Activated T-helper 1 cell treated with anti-CD3 and anti-CD28 coated beads, Interleukin-12 subunit alpha, Interleukin-12 subunit beta, Interleukin-2, Interleukin-4 antibody, amounts not matched to agents 30 ng/mL and 10 ng/mL and 1 ng/mL, durations not matched to agents 14 hours and 24 hours and 36 hours (primary cell): ENCODE measurements at regions of chr1 and their contacts with region 1.

Region 1: DNA sequence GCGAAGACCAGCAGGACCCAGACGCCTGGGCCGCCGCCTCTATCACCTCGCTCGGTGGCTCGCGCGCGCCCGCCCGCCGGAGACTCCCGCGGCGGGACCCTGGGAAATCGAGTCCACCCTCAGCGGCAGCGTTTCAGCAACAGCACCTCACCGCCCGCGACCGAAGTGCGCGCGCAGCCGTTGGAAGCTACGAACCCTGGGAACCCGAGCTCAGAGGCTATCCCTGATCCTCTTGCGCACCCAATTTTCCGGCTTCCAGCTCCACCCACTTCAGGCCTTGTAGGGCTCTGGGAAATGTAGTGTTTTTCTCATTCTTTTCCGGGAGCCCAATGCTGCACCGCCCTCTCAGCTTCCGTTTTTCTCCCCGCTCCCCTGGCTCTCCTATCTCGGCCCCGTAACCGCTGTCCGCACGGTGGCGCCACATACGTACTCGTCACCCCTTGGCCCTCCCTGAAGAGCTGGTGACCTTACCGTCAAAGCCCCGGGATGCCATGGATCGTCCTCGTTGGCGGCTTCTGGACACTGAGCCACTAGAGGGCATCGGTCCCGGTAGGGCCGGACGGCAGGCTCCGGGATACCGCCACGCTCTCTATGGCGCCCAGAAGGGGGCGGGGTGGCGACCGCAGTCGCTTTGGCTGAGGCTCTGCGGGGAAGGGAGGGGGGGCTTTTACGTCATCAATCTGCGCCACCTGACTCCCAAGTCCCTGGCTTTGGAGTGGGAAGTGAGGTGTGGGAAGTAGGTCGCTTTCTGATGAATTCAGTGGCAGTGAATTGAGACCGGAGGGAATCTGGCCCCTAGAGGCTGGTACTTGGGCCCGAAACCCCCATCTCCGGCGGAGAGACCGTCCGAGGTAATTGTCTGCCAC is at the starts of genes ODR4 and TPR:
- DNase-seq: peak; percentile 96
- H3K4me3 Mint-ChIP-seq: peak within 1 kb of the TSS; percentile 100
- H3K27ac Mint-ChIP-seq: peak within 1 kb of the TSS; percentile 96
- H3K4me1 Mint-ChIP-seq: peaks cover 59% of the 10 kb centered on the region
- H3K27me3 Mint-ChIP-seq: peaks cover 4% of the 10 kb centered on the region
- total RNA-seq, gene ODR4: 15.5 and 17.7 TPM in 2 replicates
- total RNA-seq, gene TPR: 174 and 179 TPM in 2 replicates

Region 2: DNA sequence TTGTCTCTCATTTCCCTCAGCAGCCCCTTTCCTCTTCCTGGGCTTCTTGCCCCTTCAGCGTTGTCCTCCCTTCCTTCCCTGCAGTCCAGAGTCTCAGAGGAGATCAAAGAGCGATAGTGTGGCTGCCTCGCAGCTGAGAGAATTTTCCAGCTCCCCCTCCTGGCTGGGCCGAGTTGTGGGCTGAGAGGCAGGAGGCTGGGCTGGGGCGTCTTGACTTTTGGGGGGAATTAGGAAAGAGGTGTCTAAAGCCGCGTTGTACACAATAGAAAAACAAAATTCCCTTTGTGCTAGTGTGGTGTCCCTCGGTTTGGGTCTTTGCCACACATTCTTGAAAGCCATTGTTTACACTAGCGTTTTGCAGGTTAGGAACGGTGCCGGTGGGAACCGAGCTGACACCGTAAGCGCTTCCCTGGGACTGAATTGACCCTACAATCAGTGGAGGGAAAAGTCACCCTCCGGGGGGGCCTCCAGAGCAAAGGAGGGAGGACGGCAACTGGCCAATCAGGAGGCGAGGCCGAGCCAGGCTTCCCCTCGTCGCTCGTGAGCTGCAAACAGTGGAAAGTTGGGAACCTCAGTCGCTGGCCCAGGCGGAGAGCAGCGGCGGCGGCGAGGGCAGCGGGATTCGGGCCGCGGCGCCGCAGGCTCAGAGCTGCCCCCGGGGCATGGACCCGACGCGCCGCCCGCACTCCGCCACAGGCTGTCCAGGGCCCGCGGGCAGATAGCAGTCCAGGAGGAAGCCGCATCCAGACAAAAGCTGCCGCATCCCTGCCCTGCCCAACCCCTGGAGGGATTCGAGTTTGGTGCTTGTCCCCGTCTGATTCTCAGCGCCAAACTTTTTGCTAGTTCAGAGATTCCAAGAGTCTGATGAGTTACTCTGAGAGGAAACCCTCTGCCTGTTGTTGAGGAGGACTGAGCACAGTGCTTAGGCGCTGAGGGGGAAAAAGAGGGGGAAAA is 641.2 kb before region 1 on chr1 and contains the start of gene HMCN1:
- intact Hi-C with region 1: loop called (anchors 5 kb)
- DNase-seq: peak; percentile 9
- H3K4me3 Mint-ChIP-seq: peak within 1 kb of the TSS; percentile 70
- H3K27ac Mint-ChIP-seq: no peak within 1 kb of the TSS
- H3K4me1 Mint-ChIP-seq: peaks cover 18% of the 10 kb centered on the region
- H3K27me3 Mint-ChIP-seq: peaks cover 59% of the 10 kb centered on the region
- total RNA-seq, gene HMCN1: under 0.01 TPM in 1 of 2 replicates, not detected in the other

Region 3: DNA sequence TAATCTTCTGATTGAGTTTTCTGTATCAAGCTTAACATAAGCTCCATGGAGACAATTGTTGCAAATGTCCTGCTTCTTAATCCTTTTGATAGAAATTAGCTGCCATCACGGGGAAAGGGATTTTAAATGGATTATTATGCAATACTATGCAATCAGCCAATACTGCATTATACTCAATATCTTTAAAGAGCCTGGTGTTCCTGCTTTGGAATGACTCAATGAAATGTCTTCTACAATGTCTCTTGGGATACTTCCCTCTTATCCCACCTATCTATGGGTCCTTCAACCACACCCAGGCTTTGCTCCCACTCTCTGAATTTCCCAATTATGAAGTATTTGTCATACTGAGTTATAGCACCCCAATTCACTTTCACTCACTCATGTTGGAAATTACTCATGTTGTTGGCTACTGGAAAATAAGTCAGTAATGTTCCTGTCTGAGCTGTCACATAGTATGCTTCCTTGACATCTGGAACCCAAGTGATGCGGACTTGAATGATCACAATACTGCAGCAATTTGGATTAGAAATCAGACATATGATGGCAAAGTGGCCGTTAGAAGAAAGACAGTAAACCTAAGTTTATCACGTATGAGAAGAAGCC is 85.3 kb before region 1 on chr1:
- intact Hi-C with region 1: loop called (anchors 1 kb)
- DNase-seq: no peak
- H3K4me3 Mint-ChIP-seq: peak overlapping the region; percentile 59
- H3K27ac Mint-ChIP-seq: peak overlapping the region; percentile 91
- H3K4me1 Mint-ChIP-seq: peaks cover 82% of the 10 kb centered on the region
- H3K27me3 Mint-ChIP-seq: no peaks in the 10 kb centered on the region

Region 4: DNA sequence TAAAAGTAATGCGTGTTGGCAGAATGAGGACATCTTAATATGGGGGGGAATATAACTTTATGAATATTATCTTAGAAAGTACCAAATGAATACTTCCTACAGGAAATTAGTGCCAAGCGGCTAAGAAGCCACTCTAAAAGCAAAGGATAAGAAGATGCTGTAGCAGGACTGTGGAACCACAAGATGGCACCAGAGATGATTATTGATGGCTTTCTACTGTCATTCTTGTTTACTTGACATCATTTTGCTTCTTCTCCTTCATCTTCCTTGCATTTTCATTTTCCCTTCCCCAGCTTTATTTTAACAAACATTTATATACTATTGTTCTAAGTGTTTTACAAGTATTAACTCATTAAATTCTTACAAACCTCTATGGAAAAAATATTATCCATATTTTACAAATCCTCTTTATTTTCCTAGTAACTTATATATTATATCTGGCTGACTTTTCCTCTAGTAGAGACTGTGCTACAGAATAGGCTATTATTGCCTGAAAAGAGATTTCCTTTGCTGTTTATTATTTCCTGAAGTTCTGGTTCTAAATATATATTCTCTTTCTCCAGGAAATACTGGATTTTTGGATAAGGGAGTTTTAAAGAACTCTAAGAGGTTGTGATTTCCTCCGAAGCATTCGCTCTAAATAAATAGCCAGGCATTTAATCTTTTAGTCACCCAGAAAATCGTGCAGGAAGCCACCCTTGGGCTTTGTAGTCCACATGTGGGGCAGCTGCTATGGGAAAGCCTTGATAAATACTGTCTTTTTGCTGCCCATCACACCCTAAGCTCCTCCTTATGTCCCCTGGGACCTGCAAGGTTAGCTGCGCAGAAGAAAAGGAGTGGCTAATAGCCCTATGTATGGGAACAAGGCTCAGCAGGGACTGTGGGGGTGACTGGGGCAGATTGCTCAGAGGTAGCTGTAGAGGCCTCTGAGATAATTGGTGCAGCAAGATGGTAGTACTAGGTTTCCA is 70.1 kb before region 1 on chr1:
- intact Hi-C with region 1: loop called (anchors 1 kb)
- DNase-seq: no peak
- H3K4me3 Mint-ChIP-seq: peak overlapping the region; percentile 48
- H3K27ac Mint-ChIP-seq: peak overlapping the region; percentile 86
- H3K4me1 Mint-ChIP-seq: peaks cover 58% of the 10 kb centered on the region
- H3K27me3 Mint-ChIP-seq: no peaks in the 10 kb centered on the region

Region 5: DNA sequence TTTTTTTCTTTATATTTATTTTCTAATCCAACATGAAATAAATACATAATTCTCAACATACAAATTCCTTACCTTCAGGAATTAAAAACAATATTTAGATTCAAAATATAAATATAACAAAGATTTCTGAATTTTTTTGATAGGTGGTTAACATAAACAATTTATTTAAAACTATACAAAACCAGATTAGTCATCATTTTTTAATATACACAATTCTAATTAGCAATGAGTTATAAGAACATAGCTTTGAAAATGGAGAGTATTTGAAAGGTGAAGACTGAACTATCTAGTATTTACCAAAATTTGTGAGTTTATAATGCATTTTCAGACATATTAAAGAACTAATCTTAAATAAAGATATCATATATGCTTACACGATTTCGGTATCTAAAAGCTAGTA is 37.8 kb before region 1 on chr1:
- intact Hi-C with region 1: loop called (anchors 5 kb)
- DNase-seq: no peak
- H3K4me3 Mint-ChIP-seq: no peak overlapping the region
- H3K27ac Mint-ChIP-seq: no peak overlapping the region
- H3K4me1 Mint-ChIP-seq: peaks cover under 1% of the 10 kb centered on the region
- H3K27me3 Mint-ChIP-seq: no peaks in the 10 kb centered on the region